ENCODE measurements at regions of chr5 and their contacts with region 1.

Region 1: GRCh38 chr5:141412854-141413539 is at the start of gene PCDHGA10:
- DNase-seq: peak in 1 of 2 experiments; percentile 67
- H3K4me3 ChIP-seq: peak within 1 kb of the TSS; percentile 66 to 82 (median 78)
- H3K27ac ChIP-seq: no peak within 1 kb of the TSS
- H3K4me1 ChIP-seq: no peaks in the 10 kb centered on the region
- H3K27me3 ChIP-seq: peaks cover 0 to 10% (median 6%) of the 10 kb centered on the region in 4 experiments; a peak in 6 of 7 replicates
- CTCF ChIP-seq: peak; percentile 35 to 84 (median 74)
- EP300 ChIP-seq: no peak
- POLR2A ChIP-seq: 0 out of 3 replicates have a peak, but pooled peaks of 1 of the 2 experiments have one; percentile 24
- RAD21 ChIP-seq: peak; percentile 84
- total RNA-seq, gene PCDHGA10: 2.1 and 2.2 TPM in 2 replicates

Region 2: GRCh38 chr5:141223112-141223783 is 189.7 kb before region 1 on chr5 and contains the start of gene PCDHB14:
- CTCF ChIA-PET with region 1: interaction called, 24 read pairs
- POLR2A ChIA-PET with region 1: no interaction called
- DNase-seq: no peak
- H3K4me3 ChIP-seq: peak within 1 kb of the TSS; percentile 8 to 50 (median 29); a peak in 5 of 8 replicates
- H3K27ac ChIP-seq: no peak within 1 kb of the TSS
- H3K4me1 ChIP-seq: peaks cover 2 to 3% (median 3%) of the 10 kb centered on the region in 4 experiments; a peak in 2 of 7 replicates
- H3K27me3 ChIP-seq: no peaks in the 10 kb centered on the region
- CTCF ChIP-seq: peak in 2 of 3 experiments; percentile 50 to 64; a peak in 3 of 4 replicates
- EP300 ChIP-seq: no peak
- POLR2A ChIP-seq: no peak
- RAD21 ChIP-seq: peak; percentile 81 to 85
- total RNA-seq, gene PCDHB14: 2.7 and 2.9 TPM in 2 replicates

Region 3: GRCh38 chr5:141306630-141307029 is 106.4 kb before region 1 on chr5:
- CTCF ChIA-PET with region 1: no interaction called
- POLR2A ChIA-PET with region 1: no interaction called
- DNase-seq: no peak
- H3K4me3 ChIP-seq: no peak overlapping the region
- H3K27ac ChIP-seq: no peak overlapping the region
- H3K4me1 ChIP-seq: no peaks in the 10 kb centered on the region
- H3K27me3 ChIP-seq: no peaks in the 10 kb centered on the region
- CTCF ChIP-seq: no peak
- EP300 ChIP-seq: no peak
- POLR2A ChIP-seq: no peak
- RAD21 ChIP-seq: no peak

Region 4: DNA sequence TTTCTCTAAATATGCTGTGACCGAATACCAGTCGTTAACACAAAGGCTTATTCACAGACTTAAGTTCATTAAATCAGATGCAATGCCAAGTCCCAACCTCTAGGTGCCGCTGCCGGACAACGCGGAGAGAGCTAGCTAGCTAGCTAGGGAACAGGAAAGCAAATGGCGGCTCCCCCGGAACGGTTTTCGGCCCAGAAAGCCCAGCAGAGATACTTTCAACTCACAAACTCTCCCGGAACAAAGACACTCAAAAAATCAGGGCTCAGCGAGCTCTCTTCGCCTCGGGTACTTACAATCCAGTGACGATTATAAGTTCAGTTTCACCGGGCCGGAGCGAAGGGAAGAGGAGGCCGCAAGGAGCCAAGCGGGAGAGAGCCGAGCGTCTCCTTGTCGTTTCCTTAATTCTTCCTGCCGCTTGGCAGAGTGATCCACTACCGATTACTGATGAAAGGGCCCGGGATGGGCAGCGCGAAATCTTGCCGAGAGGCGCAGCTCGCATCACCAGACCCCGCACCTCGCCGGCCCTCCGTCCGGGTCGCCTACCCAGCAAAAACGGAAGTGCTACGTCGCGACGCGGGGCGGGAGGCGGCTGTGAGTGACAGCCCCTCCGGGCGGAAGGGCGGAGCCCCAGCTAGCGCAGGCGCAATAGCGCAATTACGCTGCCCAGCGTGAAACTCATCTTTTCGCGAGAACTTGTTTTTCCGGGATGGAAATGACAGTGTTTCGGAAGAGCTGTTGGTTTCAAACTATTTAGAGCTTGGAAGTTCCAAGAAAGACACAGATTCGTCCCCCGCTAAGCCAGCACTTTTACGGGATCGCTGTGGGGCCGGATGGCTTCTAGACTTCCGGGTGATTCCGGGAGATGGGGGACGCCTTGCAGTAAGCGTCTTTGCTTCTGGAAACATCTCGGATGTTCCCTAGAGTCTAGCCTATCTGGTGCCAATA is 92.5 kb before region 1 on chr5 and contains the start of gene TAF7:
- CTCF ChIA-PET with region 1: interaction called, 23 read pairs
- POLR2A ChIA-PET with region 1: interaction called, 6 read pairs
- DNase-seq: peak; percentile 77 to 95
- H3K4me3 ChIP-seq: peak within 1 kb of the TSS; percentile 79 to 99 (median 92)
- H3K27ac ChIP-seq: peak within 1 kb of the TSS; percentile 95
- H3K4me1 ChIP-seq: no peaks in the 10 kb centered on the region
- H3K27me3 ChIP-seq: no peaks in the 10 kb centered on the region
- CTCF ChIP-seq: peak; percentile 77 to 93 (median 80)
- EP300 ChIP-seq: no peak
- POLR2A ChIP-seq: peak; percentile 95 to 98
- RAD21 ChIP-seq: peak; percentile 45 to 57
- total RNA-seq, gene TAF7: 99.4 and 101 TPM in 2 replicates

Region 5: DNA sequence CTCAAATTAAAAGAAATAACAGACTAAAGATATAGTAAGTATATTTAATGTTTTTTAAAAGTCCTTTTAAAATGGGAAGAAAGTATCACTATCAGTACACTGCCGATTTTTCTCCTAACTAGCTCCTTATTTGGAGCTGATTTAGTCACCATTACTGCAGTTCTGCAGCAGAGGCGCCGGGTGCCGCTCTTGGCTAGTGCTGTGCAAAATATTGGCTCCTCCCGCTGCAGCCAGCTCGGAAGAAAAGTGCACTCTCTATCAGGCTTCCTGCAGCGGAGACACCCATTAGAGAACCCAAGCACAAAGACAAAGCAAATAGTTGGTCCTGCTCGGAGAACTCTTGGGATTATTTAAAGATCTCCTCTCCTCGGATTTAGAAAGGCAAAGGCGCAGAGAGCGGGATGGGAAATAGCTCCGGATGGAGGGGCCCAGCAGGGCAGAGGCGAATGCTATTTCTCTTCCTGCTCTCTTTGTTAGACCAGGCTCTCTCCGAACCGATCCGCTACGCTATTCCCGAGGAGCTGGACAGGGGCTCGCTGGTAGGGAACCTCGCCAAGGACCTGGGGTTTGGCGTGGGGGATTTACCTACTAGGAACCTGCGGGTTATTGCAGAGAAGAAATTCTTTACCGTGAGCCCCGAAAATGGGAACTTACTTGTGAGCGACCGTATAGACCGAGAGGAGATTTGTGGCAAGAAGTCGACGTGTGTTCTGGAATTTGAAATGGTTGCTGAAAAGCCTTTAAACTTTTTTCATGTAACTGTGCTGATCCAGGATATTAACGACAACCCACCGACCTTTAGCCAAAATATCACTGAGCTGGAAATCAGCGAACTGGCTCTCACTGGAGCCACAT is 42.8 kb before region 1 on chr5 and contains the start of gene PCDHGB3:
- CTCF ChIA-PET with region 1: interaction called, 17 read pairs
- POLR2A ChIA-PET with region 1: no interaction called
- DNase-seq: no peak
- H3K4me3 ChIP-seq: no peak within 1 kb of the TSS
- H3K27ac ChIP-seq: no peak within 1 kb of the TSS
- H3K4me1 ChIP-seq: no peaks in the 10 kb centered on the region
- H3K27me3 ChIP-seq: no peaks in the 10 kb centered on the region
- CTCF ChIP-seq: peak; percentile 14 to 28 (median 24); a peak in 3 of 4 replicates
- EP300 ChIP-seq: no peak
- POLR2A ChIP-seq: no peak
- RAD21 ChIP-seq: peak; percentile 43 to 50; a peak in 3 of 4 replicates
- total RNA-seq, gene PCDHGB3: 1.3 and 1.6 TPM in 2 replicates

Region 6: DNA sequence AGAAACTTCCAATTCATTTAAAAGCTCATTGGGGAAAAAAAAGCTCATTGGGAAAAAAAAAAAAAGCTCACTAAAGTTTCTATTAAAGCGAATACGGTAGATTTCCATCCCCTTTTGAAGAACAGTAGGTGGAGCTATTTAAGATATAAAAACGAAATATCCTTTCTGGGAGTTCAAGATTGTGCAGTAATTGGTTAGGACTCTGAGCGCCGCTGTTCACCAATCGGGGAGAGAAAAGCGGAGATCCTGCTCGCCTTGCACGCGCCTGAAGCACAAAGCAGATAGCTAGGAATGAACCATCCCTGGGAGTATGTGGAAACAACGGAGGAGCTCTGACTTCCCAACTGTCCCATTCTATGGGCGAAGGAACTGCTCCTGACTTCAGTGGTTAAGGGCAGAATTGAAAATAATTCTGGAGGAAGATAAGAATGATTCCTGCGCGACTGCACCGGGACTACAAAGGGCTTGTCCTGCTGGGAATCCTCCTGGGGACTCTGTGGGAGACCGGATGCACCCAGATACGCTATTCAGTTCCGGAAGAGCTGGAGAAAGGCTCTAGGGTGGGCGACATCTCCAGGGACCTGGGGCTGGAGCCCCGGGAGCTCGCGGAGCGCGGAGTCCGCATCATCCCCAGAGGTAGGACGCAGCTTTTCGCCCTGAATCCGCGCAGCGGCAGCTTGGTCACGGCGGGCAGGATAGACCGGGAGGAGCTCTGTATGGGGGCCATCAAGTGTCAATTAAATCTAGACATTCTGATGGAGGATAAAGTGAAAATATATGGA is 17.5 kb after region 1 on chr5 and contains the start of gene PCDHGA12:
- CTCF ChIA-PET with region 1: interaction called, 67 read pairs
- POLR2A ChIA-PET with region 1: no interaction called
- DNase-seq: no peak
- H3K4me3 ChIP-seq: no peak within 1 kb of the TSS
- H3K27ac ChIP-seq: no peak within 1 kb of the TSS
- H3K4me1 ChIP-seq: no peaks in the 10 kb centered on the region
- H3K27me3 ChIP-seq: no peaks in the 10 kb centered on the region
- CTCF ChIP-seq: no peak; a peak in 1 of 4 replicates
- EP300 ChIP-seq: no peak
- POLR2A ChIP-seq: no peak
- RAD21 ChIP-seq: peak; percentile 18 to 36; a peak in 3 of 4 replicates
- total RNA-seq, gene PCDHGA12: 1.0 and 1.3 TPM in 2 replicates

Region 7: GRCh38 chr5:141524604-141525597 is 111.9 kb after region 1 on chr5:
- CTCF ChIA-PET with region 1: interaction called, 1,236 read pairs
- POLR2A ChIA-PET with region 1: interaction called, 6 read pairs
- DNase-seq: peak; percentile 90 to 95
- H3K4me3 ChIP-seq: no peak overlapping the region
- H3K27ac ChIP-seq: peak overlapping the region; percentile 26; the same call in 1 of the 2 replicates
- H3K4me1 ChIP-seq: peaks cover 2 to 15% (median 8%) of the 10 kb centered on the region in 4 experiments; a peak in 6 of 7 replicates
- H3K27me3 ChIP-seq: no peaks in the 10 kb centered on the region
- CTCF ChIP-seq: peak; percentile 99 to 100 (median 99)
- EP300 ChIP-seq: peak in 1 of 2 experiments; percentile 68; a peak in 1 of 3 replicates
- POLR2A ChIP-seq: no peak
- RAD21 ChIP-seq: peak; percentile 90 to 91

Region 8: GRCh38 chr5:141613344-141613743 is 200.3 kb after region 1 on chr5:
- CTCF ChIA-PET with region 1: no interaction called
- POLR2A ChIA-PET with region 1: no interaction called
- DNase-seq: no peak
- H3K4me3 ChIP-seq: no peak overlapping the region
- H3K27ac ChIP-seq: no peak overlapping the region
- H3K4me1 ChIP-seq: peaks cover 0 to 4% (median 2%) of the 10 kb centered on the region in 4 experiments; a peak in 3 of 7 replicates
- H3K27me3 ChIP-seq: no peaks in the 10 kb centered on the region
- CTCF ChIP-seq: no peak
- EP300 ChIP-seq: no peak
- POLR2A ChIP-seq: no peak
- RAD21 ChIP-seq: no peak

Measured in H1 (cell line).